ENCODE measurements at regions of chr18 and their contacts with region 1.

Region 1: DNA sequence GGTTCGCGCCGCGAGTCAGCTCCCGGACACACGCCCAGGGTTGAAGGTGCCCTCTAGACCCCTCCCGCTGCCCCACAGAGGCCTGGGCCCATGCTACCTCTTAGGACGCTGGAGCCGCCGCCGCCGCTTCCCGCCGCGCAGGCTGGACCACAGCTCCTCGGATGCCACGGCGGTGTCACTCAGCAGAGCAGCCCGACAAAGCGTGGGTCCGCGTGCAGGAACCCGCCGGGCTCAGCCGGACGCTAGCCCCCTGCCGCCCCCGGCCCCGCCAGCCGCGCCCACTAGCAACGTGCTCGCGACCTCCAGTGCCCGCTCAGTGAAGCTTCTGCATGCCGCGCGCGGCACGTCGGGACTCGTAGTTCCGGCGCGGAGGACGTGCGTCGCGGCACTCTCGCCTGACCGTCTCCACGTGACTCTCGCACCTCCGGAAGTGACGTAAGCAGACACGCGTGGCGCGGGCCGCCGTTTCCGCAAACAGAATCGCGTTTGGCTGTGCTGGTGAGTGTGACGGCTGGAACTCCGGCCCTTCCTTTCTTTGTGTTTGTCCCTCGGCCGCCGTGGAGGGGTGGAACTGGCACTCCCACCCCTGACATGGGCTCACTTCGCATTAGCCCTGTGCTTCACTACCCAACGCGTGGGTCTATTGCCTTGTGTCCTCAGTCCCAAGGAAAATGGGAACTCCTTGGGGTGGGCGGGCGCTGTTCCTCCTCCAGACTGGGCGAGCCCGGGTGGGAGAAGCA is at the starts of genes FAM210A and RNMT:
- DNase-seq: peak; percentile 93
- H3K4me3 Mint-ChIP-seq: peak within 1 kb of the TSS; percentile 79
- H3K27ac Mint-ChIP-seq: peak within 1 kb of the TSS; percentile 93
- H3K4me1 Mint-ChIP-seq: peaks cover 31% of the 10 kb centered on the region
- H3K27me3 Mint-ChIP-seq: no peaks in the 10 kb centered on the region
- CTCF ChIP-seq: no peak
- total RNA-seq, gene FAM210A: 20.8 and 25.9 TPM in 2 replicates
- total RNA-seq, gene RNMT: 42.9 and 43.2 TPM in 2 replicates

Region 2: GRCh38 chr18:13800505-13801259 is 74.3 kb after region 1 on chr18:
- CTCF ChIA-PET with region 1: interaction called, 3 read pairs
- intact Hi-C with region 1: loop called (anchors 2 kb)
- DNase-seq: peak; percentile 90
- H3K4me3 Mint-ChIP-seq: peak overlapping the region; percentile 71
- H3K27ac Mint-ChIP-seq: peak overlapping the region; percentile 50
- H3K4me1 Mint-ChIP-seq: peaks cover 40% of the 10 kb centered on the region
- H3K27me3 Mint-ChIP-seq: no peaks in the 10 kb centered on the region
- CTCF ChIP-seq: peak; percentile 47